Left colon (tissue), 2 donors: ENCODE measurements at regions of chr1 and their contacts with region 1.

Region 1: DNA sequence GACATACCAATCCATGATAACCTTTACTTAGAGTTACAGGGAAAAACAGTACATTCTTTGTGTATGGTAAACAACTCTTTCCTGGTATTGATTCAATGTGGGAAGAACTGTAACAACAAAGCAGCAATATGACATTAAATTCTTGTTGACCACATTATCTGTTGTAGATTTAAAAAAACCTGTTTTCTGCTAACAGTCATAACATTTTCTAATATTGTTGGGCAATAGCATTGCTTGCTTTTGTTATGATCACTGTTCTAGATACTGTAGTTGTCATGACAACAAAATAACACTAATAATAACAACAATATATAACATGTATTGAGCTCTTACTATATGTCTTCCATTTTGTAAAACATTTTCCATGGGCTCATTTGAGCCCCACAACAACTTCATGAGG is 54.2 kb downstream of the PDE4B start:
- DNase-seq: no peak
- ATAC-seq: no peak

Region 2: DNA sequence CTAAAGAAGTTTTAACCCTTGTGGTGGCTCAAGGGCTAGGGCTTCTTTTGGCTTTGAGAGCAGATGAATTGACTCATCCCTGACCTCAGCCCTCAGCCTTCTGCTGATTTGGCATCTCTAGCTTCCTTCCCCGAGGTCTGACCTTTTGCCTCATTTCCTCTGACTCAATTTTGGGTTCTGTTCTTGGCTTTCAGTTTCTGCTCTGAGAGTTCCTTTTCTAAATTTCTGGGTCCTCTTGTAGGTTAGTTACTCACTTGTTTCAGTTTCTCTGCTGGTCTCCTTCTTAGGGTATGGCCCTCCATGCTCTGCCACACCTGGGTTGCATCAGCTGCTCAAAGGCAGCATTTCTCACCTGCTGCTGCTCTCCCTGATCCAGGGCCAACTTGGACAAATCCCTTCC is 34.8 kb before region 1 on chr1:
- intact Hi-C with region 1: loop called in 1 of 2 experiments (anchors 2 kb)
- DNase-seq: peak; percentile 10 to 49
- ATAC-seq: peak; percentile 40

Region 3: DNA sequence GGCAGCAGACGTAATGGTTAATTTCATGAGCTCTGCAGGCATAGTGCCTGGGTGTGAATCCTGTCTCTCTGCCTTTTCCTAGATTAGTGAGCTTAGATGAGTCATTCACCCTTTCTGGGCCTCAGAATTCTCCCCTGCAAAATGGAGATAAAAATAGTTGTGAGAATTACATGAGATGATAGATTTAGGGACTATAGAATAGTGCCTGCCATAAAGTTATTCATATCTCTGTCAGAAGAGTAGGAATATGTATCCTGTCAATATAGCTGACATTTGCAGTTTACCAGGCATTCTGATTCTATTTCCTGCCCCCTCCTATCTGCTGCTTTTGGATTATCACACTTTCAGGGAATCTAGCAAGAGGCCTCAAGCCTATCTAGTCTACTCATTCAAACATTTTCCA is 57.8 kb after region 1 on chr1:
- intact Hi-C with region 1: no loop called
- DNase-seq: no peak
- ATAC-seq: no peak